Panc1 (cell line): ENCODE measurements at regions of chr19 and their contacts with region 1.

Region 1: GRCh38 chr19:19444681-19445155 is 39.2 kb downstream of the GATAD2A start:
- DNase-seq: no peak
- ATAC-seq: no peak
- H3K4me3 ChIP-seq: no peak overlapping the region
- H3K27ac ChIP-seq: no peak overlapping the region
- H3K4me1 ChIP-seq: no peaks in the 10 kb centered on the region
- H3K27me3 ChIP-seq: no peaks in the 10 kb centered on the region
- CTCF ChIP-seq: no peak

Region 2: GRCh38 chr19:19420570-19421298 is 24.0 kb before region 1 on chr19:
- CTCF ChIA-PET with region 1: no interaction called
- POLR2A ChIA-PET with region 1: interaction called, 12 read pairs
- in situ Hi-C with region 1: no loop called
- intact Hi-C with region 1: no loop called
- DNase-seq: no peak
- ATAC-seq: no peak
- H3K4me3 ChIP-seq: no peak overlapping the region
- H3K27ac ChIP-seq: no peak overlapping the region
- H3K4me1 ChIP-seq: no peaks in the 10 kb centered on the region
- H3K27me3 ChIP-seq: no peaks in the 10 kb centered on the region
- CTCF ChIP-seq: no peak

Region 3: GRCh38 chr19:19434483-19435045 is 10.2 kb before region 1 on chr19:
- CTCF ChIA-PET with region 1: no interaction called
- POLR2A ChIA-PET with region 1: no interaction called
- in situ Hi-C with region 1: no loop called
- intact Hi-C with region 1: no loop called
- DNase-seq: no peak
- ATAC-seq: no peak
- H3K4me3 ChIP-seq: no peak overlapping the region
- H3K27ac ChIP-seq: no peak overlapping the region
- H3K4me1 ChIP-seq: no peaks in the 10 kb centered on the region
- H3K27me3 ChIP-seq: no peaks in the 10 kb centered on the region
- CTCF ChIP-seq: no peak